Pancreas (tissue), 10 donors: ENCODE measurements at regions of chr19 and their contacts with region 1.

Region 1: GRCh38 chr19:49436369-49437017 is 4.8 kb downstream of the SLC17A7 start:
- DNase-seq: peak in 2 of 6 donors; percentile 55 to 67
- ATAC-seq: peak in 1 of 4 donors; percentile 26
- H3K4me3 ChIP-seq: no peak overlapping the region
- H3K27ac ChIP-seq: no peak overlapping the region
- H3K4me1 ChIP-seq: no peaks in the 10 kb centered on the region
- H3K27me3 ChIP-seq: peaks cover 0 to 29% (median 0%) of the 10 kb centered on the region in 4 donors
- CTCF ChIP-seq: no peak

Region 2: DNA sequence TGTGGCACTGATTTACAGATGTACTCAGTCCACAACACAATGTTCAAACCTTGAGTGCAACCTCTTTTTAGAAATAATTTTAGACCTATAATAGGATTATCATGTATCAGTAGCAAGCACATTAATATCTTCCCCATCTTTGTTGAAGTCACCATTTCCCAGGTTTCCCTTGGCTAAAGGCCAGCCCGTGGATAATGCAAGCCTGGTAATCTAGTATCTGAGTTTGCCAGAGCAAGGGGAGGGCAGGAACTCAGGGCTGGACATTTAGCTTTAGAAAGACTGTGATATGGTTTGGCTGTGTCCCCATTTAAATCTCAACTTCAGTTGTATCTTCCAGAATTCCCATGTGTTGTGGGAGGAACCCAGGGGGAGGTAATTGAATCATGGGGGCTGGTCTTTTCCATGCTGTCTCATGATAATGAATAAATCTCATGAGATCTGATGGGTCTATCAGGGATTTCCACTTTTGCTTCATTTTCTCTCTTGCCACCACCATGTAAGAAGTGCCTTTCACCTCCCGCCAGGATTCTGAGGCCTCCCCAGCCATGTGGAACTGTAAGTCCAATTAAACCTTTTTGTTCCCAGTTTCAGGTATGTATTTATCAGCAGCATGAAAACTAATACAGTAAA is 149.2 kb before region 1 on chr19:
- intact Hi-C with region 1: no loop called
- DNase-seq: no peak
- ATAC-seq: no peak
- H3K4me3 ChIP-seq: no peak overlapping the region
- H3K27ac ChIP-seq: no peak overlapping the region
- H3K4me1 ChIP-seq: no peaks in the 10 kb centered on the region
- H3K27me3 ChIP-seq: no peaks in the 10 kb centered on the region
- CTCF ChIP-seq: no peak

Region 3: DNA sequence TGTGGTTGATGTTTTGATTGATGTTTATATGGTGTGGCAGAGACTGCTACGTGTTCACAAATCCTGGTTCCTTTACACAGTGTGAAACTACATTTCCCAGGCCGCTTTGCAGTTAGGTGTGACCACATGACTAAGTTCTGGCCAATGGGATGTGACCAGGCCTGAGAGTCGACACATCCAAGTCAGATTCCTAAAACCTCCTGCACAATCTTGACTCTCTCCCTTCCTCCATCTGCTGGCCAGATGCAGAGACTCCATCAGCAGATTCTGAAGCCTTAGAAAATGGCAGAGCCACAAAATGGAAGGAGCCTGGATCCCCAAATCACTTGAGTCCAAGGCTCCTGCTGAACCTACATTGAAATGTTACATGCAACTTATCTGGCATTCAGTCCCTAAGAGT is 88.6 kb before region 1 on chr19:
- intact Hi-C with region 1: no loop called
- DNase-seq: peak in 2 of 6 donors; percentile 3 to 48
- ATAC-seq: peak; percentile 57 to 85 (median 68)
- H3K4me3 ChIP-seq: no peak overlapping the region
- H3K27ac ChIP-seq: no peak overlapping the region
- H3K4me1 ChIP-seq: peaks cover 0 to 4% (median 0%) of the 10 kb centered on the region in 3 donors
- H3K27me3 ChIP-seq: no peaks in the 10 kb centered on the region
- CTCF ChIP-seq: no peak

Region 4: DNA sequence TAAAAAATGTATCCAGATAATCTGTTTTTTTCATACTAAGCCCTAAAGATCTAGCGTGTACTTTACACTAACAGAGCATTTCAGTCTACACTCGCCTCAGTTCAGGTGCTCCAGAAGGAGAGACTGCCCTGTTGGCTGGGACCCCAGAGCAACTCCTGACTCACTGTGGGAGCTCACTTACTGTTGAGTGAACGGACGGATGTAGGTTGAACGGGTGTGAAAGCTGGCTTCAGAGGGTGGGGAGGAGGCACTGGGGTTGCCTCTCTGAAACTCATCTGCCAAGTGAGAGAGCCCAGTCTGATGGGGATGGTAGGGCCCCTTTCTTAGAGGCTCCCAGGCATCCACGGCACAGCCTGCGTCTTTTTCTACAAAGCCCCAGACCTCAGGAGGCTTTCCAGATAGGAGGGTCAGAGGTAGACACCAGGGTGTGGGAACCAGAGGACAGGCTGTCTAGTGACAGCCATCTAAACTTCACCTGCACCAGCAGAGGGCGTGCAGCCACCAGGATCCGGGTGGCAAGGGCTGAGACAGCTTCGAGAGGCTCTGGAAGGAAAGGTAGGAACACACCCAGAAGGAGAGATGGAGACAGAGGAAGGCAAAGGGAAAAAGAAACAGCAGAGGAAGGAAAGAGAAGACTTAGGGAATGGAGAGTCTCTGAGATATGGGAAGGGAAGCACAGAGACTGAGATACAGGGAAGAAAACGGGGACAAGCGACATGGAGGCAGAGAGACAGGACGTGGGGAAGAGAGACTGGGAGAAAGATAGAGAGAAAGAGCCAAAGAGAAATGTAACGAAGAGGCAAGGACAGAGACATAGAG is 44.7 kb before region 1 on chr19:
- intact Hi-C with region 1: loop called (anchors 5 to 10 kb)
- DNase-seq: peak; percentile 73 to 92 (median 82)
- ATAC-seq: peak; percentile 62 to 89 (median 76)
- H3K4me3 ChIP-seq: peak overlapping the region in 1 of 4 donors; percentile 32
- H3K27ac ChIP-seq: peak overlapping the region; percentile 65 to 85 (median 76)
- H3K4me1 ChIP-seq: peaks cover 3 to 5% (median 5%) of the 10 kb centered on the region in 3 donors
- H3K27me3 ChIP-seq: no peaks in the 10 kb centered on the region
- CTCF ChIP-seq: peak; percentile 61 to 76 (median 74)

Region 5: GRCh38 chr19:49643466-49643865 is 207.0 kb after region 1 on chr19:
- intact Hi-C with region 1: no loop called
- DNase-seq: no peak
- ATAC-seq: no peak
- H3K4me3 ChIP-seq: no peak overlapping the region
- H3K27ac ChIP-seq: no peak overlapping the region
- H3K4me1 ChIP-seq: peaks cover 5 to 18% (median 8%) of the 10 kb centered on the region in 3 donors
- H3K27me3 ChIP-seq: no peaks in the 10 kb centered on the region
- CTCF ChIP-seq: no peak